ENCODE measurements at regions of chr17 and their contacts with region 1.

Region 1: GRCh38 chr17:13594762-13595598 is 6.7 kb downstream of the HS3ST3A1 start:
- DNase-seq: peak; percentile 55 to 77 (median 74)
- ATAC-seq: peak in 3 of 4 donors; percentile 65 to 73 (median 71)
- H3K4me3 ChIP-seq: no peak overlapping the region
- H3K27ac ChIP-seq: no peak overlapping the region
- H3K4me1 ChIP-seq: peaks cover 0 to 20% (median 3%) of the 10 kb centered on the region in 12 donors
- H3K27me3 ChIP-seq: peaks cover 0 to 27% (median 3%) of the 10 kb centered on the region in 9 donors
- CTCF ChIP-seq: peak; percentile 80 to 94 (median 87)
- POLR2A ChIP-seq: no peak

Region 2: GRCh38 chr17:13337864-13338371 is 257.1 kb before region 1 on chr17:
- intact Hi-C with region 1: loop called (anchors 2 to 10 kb)
- DNase-seq: peak in 2 of 5 donors; percentile 20 to 23
- ATAC-seq: peak; percentile 20 to 57 (median 42)
- H3K4me3 ChIP-seq: peak overlapping the region in 10 of 12 donors; percentile 14 to 50 (median 42)
- H3K27ac ChIP-seq: peak overlapping the region in 3 of 12 donors; percentile 12 to 61 (median 22)
- H3K4me1 ChIP-seq: peaks cover 0 to 5% (median 0%) of the 10 kb centered on the region in 12 donors
- H3K27me3 ChIP-seq: peaks cover 0 to 3% (median 0%) of the 10 kb centered on the region in 9 donors
- CTCF ChIP-seq: peak; percentile 54 to 81 (median 71)
- POLR2A ChIP-seq: no peak

Region 3: GRCh38 chr17:14203388-14203787 is 608.4 kb after region 1 on chr17:
- intact Hi-C with region 1: loop called in 2 of 10 experiments (anchors 10 kb)
- DNase-seq: no peak
- ATAC-seq: no peak
- H3K4me3 ChIP-seq: no peak overlapping the region
- H3K27ac ChIP-seq: peak overlapping the region in 1 of 12 donors; percentile 78
- H3K4me1 ChIP-seq: peaks cover 0 to 76% (median 14%) of the 10 kb centered on the region in 12 donors
- H3K27me3 ChIP-seq: no peaks in the 10 kb centered on the region
- CTCF ChIP-seq: peak in 6 of 12 donors; percentile 2 to 29 (median 21)
- POLR2A ChIP-seq: no peak

Region 4: DNA sequence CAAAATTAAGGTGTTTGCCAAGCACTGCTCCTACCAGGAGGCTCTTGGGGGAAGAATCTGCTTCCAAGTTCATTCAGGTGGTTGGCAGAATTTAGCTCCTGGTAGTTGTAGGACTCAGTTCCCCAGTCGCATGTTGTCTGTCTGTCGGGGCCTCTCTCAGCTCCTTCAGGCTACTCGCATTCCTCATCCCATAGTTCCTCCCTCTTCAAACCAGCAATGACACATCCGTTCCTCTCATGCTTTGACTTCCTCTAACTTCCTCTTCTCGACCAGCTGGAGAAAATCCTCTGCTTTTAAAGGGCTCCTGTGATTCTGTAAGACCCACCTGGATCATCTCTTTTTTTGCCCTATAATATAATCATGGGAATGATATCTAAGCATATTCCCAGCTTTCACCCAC is 1562.1 kb after region 1 on chr17:
- intact Hi-C with region 1: loop called in 1 of 10 experiments (anchors 10 kb)
- DNase-seq: no peak
- ATAC-seq: no peak
- H3K4me3 ChIP-seq: no peak overlapping the region
- H3K27ac ChIP-seq: no peak overlapping the region
- H3K4me1 ChIP-seq: peaks cover 0 to 4% (median 0%) of the 10 kb centered on the region in 12 donors
- H3K27me3 ChIP-seq: peaks cover 0 to 5% (median 0%) of the 10 kb centered on the region in 9 donors
- CTCF ChIP-seq: no peak
- POLR2A ChIP-seq: no peak